Ovary (tissue), 10 donors: ENCODE measurements at regions of chr16 and their contacts with region 1.

Region 1: DNA sequence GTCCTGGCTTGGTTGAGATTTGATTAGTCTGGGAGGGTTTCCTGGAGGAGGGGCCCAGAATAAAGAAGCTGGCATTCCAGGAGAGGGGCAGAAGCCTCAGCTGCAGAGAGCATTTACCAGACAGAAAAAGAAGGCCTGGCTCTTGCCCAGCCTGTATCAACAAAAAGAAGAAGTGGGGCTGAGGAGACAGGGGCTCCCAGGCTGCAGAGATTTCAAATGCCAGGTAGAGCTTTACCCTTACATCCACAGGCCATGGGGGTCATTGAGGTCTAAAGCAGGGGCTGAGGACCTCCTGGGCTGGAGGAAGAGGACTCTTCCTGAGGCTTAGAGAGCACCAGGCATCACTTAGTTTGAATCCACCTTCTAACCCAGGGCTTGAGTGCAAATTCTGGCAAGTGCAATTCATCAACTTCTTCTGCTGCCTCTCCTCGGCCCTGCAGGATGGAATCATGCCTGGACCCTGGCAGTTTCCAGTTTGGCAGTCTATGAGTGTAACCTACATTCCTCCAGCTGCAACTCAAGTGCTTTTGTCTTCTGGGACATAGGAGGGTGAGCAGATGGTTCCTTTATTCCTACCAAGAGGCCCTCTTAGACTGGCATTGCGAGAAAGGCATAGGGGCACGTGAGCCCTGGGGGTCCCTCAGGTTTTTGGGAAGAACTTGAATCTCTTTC is 15.3 kb downstream of the CA7 start:
- DNase-seq: no peak
- H3K4me3 ChIP-seq: no peak overlapping the region
- H3K27ac ChIP-seq: no peak overlapping the region
- H3K4me1 ChIP-seq: no peaks in the 10 kb centered on the region
- H3K27me3 ChIP-seq: no peaks in the 10 kb centered on the region
- CTCF ChIP-seq: no peak
- EP300 ChIP-seq: no peak
- POLR2A ChIP-seq: no peak

Region 2: GRCh38 chr16:66728117-66728787 is 131.3 kb before region 1 on chr16:
- intact Hi-C with region 1: loop called in 1 of 4 experiments (anchors 10 kb)
- DNase-seq: peak in 3 of 5 donors; percentile 37 to 45 (median 44)
- H3K4me3 ChIP-seq: no peak overlapping the region
- H3K27ac ChIP-seq: peak overlapping the region in 1 of 2 donors; percentile 21
- H3K4me1 ChIP-seq: no peaks in the 10 kb centered on the region
- H3K27me3 ChIP-seq: no peaks in the 10 kb centered on the region
- CTCF ChIP-seq: peak in 2 of 3 donors; percentile 63 to 67
- EP300 ChIP-seq: no peak
- POLR2A ChIP-seq: no peak